ENCODE measurements at regions of chr16 and their contacts with region 1.

Region 1: DNA sequence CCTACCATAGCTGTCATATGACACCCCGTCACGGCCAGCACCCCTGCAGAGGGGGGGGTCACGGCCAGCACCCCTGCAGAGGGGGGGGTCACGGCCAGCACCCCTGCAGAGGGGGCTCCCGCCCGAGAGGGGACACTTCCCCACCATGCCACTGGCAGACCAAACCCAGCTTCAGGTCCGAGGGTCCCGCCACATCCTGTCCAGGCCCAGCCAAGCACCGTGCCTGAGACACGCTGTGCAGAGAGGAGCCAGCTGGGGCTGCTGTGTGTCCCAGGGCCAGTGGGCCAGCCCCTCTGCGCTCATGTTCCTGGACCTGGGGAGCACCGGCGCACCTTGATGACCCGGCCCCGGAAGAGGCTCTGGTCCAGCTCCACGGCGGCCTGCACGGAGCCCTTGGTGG is 1.9 kb downstream of the PABPN1L start:
- DNase-seq: no peak
- H3K4me3 ChIP-seq: no peak overlapping the region
- H3K27ac ChIP-seq: no peak overlapping the region
- H3K27me3 ChIP-seq: no peaks in the 10 kb centered on the region
- CTCF ChIP-seq: no peak

Region 2: DNA sequence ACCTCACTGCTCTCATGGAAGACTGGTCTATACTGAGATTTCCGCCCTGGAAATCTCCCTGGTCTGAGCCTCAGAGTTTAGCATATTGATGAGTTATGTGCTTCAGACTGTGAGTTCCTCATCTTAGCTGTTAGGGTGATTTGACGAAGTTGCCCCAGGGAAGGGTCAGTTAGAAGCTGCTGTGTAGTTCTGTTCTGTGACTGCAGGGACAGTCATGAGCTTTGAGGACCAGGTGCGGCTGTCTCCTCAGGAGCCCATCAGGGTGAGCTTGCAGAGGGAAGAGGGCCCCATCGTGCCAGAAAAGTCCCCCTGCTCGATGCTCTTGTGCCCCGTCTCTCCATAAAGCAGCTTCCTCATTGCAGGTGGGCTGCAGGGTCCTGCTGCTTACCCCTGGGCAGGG is 254.4 kb before region 1 on chr16:
- intact Hi-C with region 1: no loop called
- DNase-seq: no peak
- H3K4me3 ChIP-seq: no peak overlapping the region
- H3K27ac ChIP-seq: peak overlapping the region in 1 of 59 donors; percentile 48
- H3K27me3 ChIP-seq: no peaks in the 10 kb centered on the region
- CTCF ChIP-seq: peak in 1 of 56 donors; percentile 11

Region 3: GRCh38 chr16:88831838-88832237 is 32.7 kb before region 1 on chr16:
- intact Hi-C with region 1: no loop called
- DNase-seq: no peak
- H3K4me3 ChIP-seq: no peak overlapping the region
- H3K27ac ChIP-seq: no peak overlapping the region
- H3K27me3 ChIP-seq: no peaks in the 10 kb centered on the region
- CTCF ChIP-seq: no peak

Region 4: GRCh38 chr16:89099905-89100304 is 235.4 kb after region 1 on chr16:
- intact Hi-C with region 1: loop called in 1 of 2 experiments (anchors 5 kb)
- DNase-seq: no peak
- H3K4me3 ChIP-seq: no peak overlapping the region
- H3K27ac ChIP-seq: no peak overlapping the region
- H3K27me3 ChIP-seq: no peaks in the 10 kb centered on the region
- CTCF ChIP-seq: no peak

Region 5: DNA sequence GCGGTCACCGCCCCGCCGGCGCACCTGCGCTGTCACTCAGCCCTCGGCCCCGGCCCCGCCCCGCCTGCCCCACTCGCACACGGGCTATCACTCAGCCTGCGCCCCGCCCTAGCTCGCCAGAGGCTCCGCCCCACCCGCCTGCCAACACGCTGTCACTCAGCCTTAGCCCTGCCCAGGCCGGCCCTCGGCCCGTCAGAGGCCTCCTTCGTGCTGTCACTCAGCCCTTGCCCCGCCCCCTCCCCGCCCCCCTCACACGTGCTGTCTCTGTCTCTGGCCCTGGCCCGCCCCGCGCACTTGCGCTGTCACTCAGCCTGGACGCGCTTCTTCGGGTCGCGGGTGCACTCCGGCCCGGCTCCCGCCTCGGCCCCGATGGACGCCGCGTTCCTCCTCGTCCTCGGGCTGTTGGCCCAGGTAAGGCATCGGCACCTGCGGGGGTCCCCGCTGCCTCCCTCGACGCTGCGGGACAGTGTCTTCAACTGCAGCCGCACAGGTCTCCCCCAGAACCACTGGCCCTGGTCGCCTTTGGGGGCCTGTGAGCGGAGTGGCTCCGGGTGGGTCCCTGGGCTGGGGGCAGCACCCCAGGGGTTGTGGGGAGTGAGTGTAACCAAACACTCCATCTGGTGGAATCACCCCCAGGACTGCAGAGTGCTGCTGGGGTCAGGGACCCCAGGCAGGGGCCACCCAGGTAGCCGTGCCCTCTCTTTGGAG is 307.1 kb after region 1 on chr16 and contains the start of gene CDH15:
- intact Hi-C with region 1: no loop called
- DNase-seq: peak; percentile 67 to 99 (median 82)
- H3K4me3 ChIP-seq: peak within 1 kb of the TSS in 58 of 59 donors; percentile 7 to 60 (median 43)
- H3K27ac ChIP-seq: peak within 1 kb of the TSS in 1 of 59 donors; percentile 91
- H3K27me3 ChIP-seq: peaks cover 0 to 39% (median 6%) of the 10 kb centered on the region in 45 donors
- CTCF ChIP-seq: no peak
- total RNA-seq, gene CDH15: 0.16 to 0.81 (median 0.31) TPM in 14 of 120 experiments, not detected in the others

Measured in dorsolateral prefrontal cortex (tissue), 120 donors.